ENCODE measurements at regions of chr10 and their contacts with region 1.

Region 1: GRCh38 chr10:29635711-29636144 is 957 bp upstream of the SVIL start:
- DNase-seq: no peak
- H3K4me3 ChIP-seq: peak overlapping the region in 1 of 4 donors; percentile 40
- H3K27ac ChIP-seq: peak overlapping the region; percentile 78 to 90 (median 88)
- H3K4me1 ChIP-seq: peaks cover 0 to 76% (median 48%) of the 10 kb centered on the region in 4 donors
- H3K27me3 ChIP-seq: no peaks in the 10 kb centered on the region
- CTCF ChIP-seq: no peak
- EP300 ChIP-seq: no peak
- POLR2A ChIP-seq: no peak

Region 2: DNA sequence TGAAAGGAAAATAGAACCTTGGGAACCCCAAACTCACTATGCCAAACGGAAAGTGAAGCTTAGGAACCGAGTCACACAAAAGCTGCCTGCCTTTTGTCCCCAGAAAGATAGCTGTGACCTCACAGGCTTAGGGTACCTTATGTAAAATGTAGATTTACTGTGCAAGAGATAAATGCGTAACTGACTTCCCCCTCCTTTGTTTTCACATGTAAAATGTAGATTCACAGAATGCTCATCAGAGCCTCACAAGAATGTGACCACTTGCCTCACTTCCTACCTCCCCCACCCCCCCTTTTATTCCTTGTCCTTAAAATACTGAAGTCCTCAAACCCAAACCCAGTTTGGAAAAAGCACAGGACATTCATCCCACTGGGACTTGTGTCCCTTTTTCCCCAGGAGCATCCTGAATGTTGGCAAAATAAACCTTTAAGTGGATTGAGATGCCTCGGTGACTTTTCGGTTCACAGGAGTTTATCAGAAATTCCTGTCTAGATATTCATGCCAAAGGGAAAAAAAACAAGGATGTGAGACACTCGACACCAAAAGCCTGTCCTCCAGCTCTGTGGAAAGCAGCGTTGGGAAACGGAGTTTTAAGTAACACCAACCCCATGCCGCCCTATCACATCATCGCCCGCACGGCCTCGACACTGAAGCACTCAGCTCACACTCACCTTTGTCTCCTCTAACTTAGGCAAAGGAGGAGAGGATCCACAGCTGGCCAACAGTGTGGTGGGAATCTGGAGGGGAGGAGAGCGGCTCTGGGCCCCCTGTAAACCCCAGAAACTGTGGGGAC is 46.9 kb before region 1 on chr10:
- intact Hi-C with region 1: no loop called
- DNase-seq: no peak
- H3K4me3 ChIP-seq: no peak overlapping the region
- H3K27ac ChIP-seq: peak overlapping the region; percentile 75 to 82 (median 78)
- H3K4me1 ChIP-seq: peaks cover 0 to 96% (median 93%) of the 10 kb centered on the region in 4 donors
- H3K27me3 ChIP-seq: no peaks in the 10 kb centered on the region
- CTCF ChIP-seq: no peak
- EP300 ChIP-seq: no peak
- POLR2A ChIP-seq: no peak

Region 3: GRCh38 chr10:29857843-29858701 is 222.3 kb after region 1 on chr10:
- intact Hi-C with region 1: loop called (anchors 5 kb)
- DNase-seq: peak; percentile 91
- H3K4me3 ChIP-seq: peak overlapping the region in 1 of 4 donors; percentile 8
- H3K27ac ChIP-seq: peak overlapping the region; percentile 72 to 83 (median 77)
- H3K4me1 ChIP-seq: peaks cover 0 to 61% (median 38%) of the 10 kb centered on the region in 4 donors
- H3K27me3 ChIP-seq: no peaks in the 10 kb centered on the region
- CTCF ChIP-seq: peak; percentile 35 to 78 (median 70)
- EP300 ChIP-seq: peak; percentile 47 to 83 (median 54)
- POLR2A ChIP-seq: no peak

Measured in sigmoid colon (tissue), 7 donors.